ENCODE measurements at regions of chr16 and their contacts with region 1.

Region 1: GRCh38 chr16:3099732-3100499 is 822 bp upstream of the ZSCAN10 start:
- DNase-seq: peak; percentile 87
- H3K4me3 Mint-ChIP-seq: peak overlapping the region; percentile 69
- H3K27ac Mint-ChIP-seq: peak overlapping the region; percentile 78
- H3K4me1 Mint-ChIP-seq: peaks cover 32% of the 10 kb centered on the region
- H3K27me3 Mint-ChIP-seq: no peaks in the 10 kb centered on the region

Region 2: DNA sequence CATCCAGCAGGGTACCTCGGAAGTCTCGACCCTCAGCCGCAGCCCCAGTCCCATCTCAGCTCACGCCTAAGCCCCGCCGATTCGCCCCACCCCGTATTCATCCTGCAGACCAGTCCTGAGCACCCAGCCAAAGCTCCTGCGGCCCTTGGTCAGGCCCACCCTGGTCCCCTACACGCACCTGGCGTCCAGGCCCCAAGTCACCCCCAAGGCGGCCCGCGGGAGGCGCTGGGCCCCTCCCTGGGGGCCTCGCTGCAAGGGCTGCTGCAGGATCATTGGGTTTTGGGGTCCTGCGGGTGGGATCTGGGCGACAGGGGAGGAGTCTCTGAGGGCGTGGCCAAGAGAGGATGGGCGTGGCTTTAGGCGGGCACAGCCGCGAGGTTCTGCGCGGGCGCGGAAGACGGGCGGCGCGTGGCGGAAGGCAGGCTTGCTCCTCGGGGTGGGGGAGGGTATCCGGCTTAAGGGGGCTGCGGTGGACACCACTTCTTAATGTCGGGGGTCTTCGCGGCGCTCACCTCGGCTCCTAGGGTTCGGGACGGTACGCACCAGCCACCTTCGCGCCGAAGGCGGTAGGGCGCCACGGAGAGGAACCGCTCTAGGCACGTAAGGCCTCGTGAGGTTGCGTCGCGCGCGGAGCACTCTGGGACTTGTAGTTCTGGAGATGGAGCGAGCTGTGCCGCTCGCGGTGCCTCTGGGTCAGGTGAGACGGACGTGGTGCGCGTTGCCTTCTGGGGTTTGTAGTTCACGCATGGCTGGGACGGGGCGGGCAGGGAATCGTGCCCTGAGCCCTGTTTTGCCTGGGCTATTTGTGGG is 76.0 kb before region 1 on chr16 and contains the starts of genes HCFC1R1 and THOC6:
- intact Hi-C with region 1: loop called (anchors 1 kb)
- DNase-seq: peak; percentile 94
- H3K4me3 Mint-ChIP-seq: peak within 1 kb of the TSS; percentile 84
- H3K27ac Mint-ChIP-seq: peak within 1 kb of the TSS; percentile 91
- H3K4me1 Mint-ChIP-seq: peaks cover 36% of the 10 kb centered on the region
- H3K27me3 Mint-ChIP-seq: peaks cover 1% of the 10 kb centered on the region
- total RNA-seq, gene HCFC1R1: 30.0 and 30.9 TPM in 2 replicates
- total RNA-seq, gene THOC6: 48.3 and 49.0 TPM in 2 replicates

Region 3: DNA sequence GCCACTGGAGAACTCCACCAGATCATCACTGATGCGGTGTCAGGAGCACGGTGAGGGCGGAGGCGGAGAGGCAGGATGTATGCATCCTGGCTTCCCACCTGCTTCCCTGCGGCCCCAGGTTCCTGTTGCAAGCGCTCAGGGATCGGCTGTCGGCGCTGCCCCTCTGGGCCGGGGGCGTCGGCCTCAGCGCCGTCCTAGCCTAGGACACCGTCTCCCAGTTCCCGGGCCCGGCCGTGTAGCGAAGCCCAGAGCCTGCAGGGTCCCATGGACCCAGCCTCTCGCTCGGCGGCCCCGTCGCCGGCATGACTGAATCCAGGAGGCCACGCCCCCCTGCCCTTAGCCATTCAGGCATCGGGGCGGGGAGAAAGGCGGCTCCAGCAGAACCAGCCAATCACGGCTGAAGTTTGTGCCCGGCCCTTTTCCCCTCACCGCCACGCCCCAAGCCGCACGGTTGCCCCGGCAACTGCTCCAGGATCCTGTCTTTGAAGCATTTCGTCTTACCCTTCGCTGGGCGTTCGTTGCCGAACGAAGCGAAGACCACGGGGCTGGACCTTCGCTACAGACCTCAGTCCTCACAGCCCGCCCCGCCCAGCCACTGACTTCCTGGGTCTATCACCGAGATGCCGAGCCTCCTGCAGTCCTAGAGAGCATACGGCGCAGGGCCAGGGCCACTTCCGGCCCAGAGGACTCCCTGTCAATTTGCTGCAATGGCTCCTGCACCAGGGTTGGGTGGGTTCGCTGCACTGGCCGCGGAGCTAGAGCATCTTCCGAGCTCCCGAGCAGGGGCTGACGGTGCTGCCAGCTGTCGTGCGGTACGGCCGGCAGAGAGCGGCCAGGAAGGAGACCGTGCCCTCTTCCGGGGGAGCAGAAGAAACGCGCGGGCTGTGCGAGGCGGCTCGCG is 24.3 kb after region 1 on chr16:
- intact Hi-C with region 1: loop called (anchors 1 kb)
- DNase-seq: peak; percentile 96
- H3K4me3 Mint-ChIP-seq: peak overlapping the region; percentile 97
- H3K27ac Mint-ChIP-seq: peak overlapping the region; percentile 93
- H3K4me1 Mint-ChIP-seq: peaks cover 42% of the 10 kb centered on the region
- H3K27me3 Mint-ChIP-seq: peaks cover 3% of the 10 kb centered on the region

Region 4: GRCh38 chr16:3134564-3135417 is 34.9 kb after region 1 on chr16 and contains the start of gene ZNF213:
- intact Hi-C with region 1: loop called (anchors 1 kb)
- DNase-seq: peak; percentile 93
- H3K4me3 Mint-ChIP-seq: peak within 1 kb of the TSS; percentile 95
- H3K27ac Mint-ChIP-seq: peak within 1 kb of the TSS; percentile 92
- H3K4me1 Mint-ChIP-seq: peaks cover 22% of the 10 kb centered on the region
- H3K27me3 Mint-ChIP-seq: no peaks in the 10 kb centered on the region
- total RNA-seq, gene ZNF213: 9.6 and 12.4 TPM in 2 replicates

Region 5: DNA sequence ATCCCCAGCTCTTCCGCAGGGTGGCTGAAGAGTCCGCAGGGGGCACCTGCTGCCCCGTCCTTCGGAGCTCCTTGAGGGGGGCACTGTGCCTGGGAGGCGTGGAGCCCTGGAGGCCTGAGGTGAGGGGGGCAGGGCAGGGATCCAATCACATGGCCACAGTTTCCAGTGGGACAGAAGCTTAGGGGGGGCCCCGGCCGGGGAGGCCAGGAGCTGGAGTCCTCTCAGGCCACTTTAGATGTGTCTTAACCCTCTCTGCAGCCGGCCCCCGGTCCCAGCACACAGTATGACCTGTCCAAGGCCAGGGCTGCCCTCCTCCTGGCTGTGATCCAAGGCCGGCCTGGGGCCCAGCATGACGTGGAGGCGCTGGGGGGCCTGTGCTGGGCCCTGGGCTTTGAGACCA is 45.7 kb after region 1 on chr16:
- intact Hi-C with region 1: no loop called
- DNase-seq: no peak
- H3K4me3 Mint-ChIP-seq: no peak overlapping the region
- H3K27ac Mint-ChIP-seq: no peak overlapping the region
- H3K4me1 Mint-ChIP-seq: peaks cover 8% of the 10 kb centered on the region
- H3K27me3 Mint-ChIP-seq: peaks cover 3% of the 10 kb centered on the region

Region 6: GRCh38 chr16:3467921-3468320 is 368.0 kb after region 1 on chr16:
- intact Hi-C with region 1: no loop called
- DNase-seq: no peak
- H3K4me3 Mint-ChIP-seq: no peak overlapping the region
- H3K27ac Mint-ChIP-seq: no peak overlapping the region
- H3K4me1 Mint-ChIP-seq: peaks cover 19% of the 10 kb centered on the region
- H3K27me3 Mint-ChIP-seq: no peaks in the 10 kb centered on the region